ENCODE measurements at regions of chr16 and their contacts with region 1.

Region 1: DNA sequence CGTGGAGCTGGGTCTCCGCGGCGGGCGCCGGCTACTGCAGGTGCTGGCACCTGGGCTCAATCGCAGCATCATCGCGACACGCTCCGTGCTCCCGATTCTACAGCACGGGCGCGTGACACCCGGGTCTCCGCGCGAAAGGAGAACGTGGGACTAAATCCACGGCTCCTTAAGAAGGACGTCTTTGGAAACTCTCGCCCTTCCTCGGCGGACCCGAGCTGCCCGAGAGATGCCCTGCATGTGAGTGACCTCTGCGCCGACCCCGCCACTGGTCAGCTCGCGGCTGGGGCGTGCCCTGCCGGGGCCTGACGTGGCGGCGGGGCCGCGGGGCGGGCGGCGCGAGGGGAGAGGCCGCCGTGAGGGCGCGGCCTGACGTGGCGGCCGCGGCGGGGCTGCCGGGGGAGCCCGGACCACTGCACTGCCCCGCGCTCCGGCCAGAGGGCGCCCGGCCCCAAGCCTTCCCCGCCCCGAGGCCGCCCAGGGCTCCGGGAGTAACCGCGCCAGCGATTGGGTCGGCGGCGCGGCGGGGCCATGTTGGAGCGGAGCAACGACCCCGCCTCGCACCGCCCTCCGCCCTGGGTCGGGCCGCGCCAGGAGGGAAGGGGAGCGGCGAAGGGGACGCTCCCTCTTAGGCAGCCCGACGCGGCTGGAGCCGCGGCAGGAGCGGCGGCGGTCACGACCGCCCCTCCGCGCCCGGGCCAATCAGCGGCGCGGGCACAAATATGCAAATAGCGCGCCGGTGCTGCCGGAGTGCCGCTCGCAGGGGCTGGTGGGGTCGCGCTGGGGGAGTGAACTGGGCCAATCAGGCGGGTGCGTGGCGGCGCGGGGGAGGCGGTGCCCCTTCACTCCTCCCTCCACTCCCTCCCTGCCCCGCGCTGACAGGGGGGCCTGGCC is 75.6 kb downstream of the CHD9 start:
- DNase-seq: peak in 1 of 2 donors; percentile 94
- H3K4me3 ChIP-seq: peak overlapping the region; percentile 88 to 89
- H3K27ac ChIP-seq: peak overlapping the region; percentile 95
- H3K4me1 ChIP-seq: peaks cover 41% of the 10 kb centered on the region
- H3K27me3 ChIP-seq: no peaks in the 10 kb centered on the region
- CTCF ChIP-seq: peak; percentile 23 to 53 (median 42)
- POLR2A ChIP-seq: peak in 1 of 2 donors; percentile 5

Region 2: DNA sequence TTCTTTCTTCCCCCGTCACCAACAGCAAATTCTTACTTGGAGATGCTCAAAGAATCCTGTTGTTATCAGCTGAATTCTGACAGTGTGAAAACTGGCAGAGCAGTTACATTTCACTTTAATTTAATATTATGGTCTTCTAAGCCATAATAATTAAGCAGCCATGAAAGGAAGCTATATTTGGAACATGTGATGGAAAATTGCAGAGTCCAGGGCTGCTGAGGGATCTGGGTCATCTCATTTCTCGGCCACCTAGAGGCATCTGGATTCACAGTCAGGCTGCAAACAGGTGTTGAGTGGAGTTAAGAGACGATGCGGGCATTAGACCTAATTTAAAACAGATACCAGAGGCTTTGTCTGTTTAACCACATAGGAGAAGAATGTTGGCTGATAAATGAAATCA is 116.1 kb before region 1 on chr16:
- intact Hi-C with region 1: no loop called
- DNase-seq: no peak
- H3K4me3 ChIP-seq: no peak overlapping the region
- H3K27ac ChIP-seq: no peak overlapping the region
- H3K4me1 ChIP-seq: no peaks in the 10 kb centered on the region
- H3K27me3 ChIP-seq: no peaks in the 10 kb centered on the region
- CTCF ChIP-seq: no peak
- POLR2A ChIP-seq: no peak

Region 3: DNA sequence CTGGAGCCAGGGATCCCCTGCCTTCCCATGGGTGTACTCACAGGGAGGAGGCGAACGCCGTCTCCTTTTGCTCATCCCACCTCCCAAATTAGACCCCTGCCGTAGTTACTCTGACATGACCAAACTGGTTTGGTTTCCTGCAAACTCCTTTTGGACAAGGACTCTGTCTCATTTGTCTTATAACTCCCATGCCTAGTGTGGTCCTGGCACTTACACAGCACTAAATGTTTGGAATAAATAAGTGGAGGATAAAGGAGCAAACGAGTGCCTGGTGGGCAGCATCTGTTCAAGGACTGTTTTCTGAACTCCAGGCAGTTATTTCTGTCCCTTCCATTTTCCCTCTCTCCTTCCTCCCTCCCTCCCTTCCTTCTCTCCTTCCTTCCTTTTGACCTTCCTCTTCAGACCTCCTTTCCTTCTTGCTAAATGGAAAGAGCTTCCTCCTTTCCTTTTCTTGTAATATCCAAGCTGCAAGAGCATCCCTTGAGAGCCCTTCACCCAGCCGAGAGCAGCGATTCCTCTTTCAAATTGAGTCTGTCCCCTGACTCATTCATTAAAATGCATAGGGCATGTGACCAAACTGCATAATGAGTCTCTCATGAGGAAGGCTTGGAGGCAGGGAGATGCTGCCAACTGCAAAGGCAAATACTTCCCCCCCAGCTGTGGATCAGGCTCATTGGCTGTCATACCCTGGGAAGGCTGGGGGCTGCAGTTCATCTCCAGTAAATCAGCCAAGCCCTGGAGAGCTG is 38.8 kb before region 1 on chr16:
- intact Hi-C with region 1: loop called (anchors 2 kb)
- DNase-seq: no peak
- H3K4me3 ChIP-seq: no peak overlapping the region
- H3K27ac ChIP-seq: peak overlapping the region; percentile 76
- H3K4me1 ChIP-seq: peaks cover 84% of the 10 kb centered on the region
- H3K27me3 ChIP-seq: no peaks in the 10 kb centered on the region
- CTCF ChIP-seq: no peak
- POLR2A ChIP-seq: no peak

Region 4: DNA sequence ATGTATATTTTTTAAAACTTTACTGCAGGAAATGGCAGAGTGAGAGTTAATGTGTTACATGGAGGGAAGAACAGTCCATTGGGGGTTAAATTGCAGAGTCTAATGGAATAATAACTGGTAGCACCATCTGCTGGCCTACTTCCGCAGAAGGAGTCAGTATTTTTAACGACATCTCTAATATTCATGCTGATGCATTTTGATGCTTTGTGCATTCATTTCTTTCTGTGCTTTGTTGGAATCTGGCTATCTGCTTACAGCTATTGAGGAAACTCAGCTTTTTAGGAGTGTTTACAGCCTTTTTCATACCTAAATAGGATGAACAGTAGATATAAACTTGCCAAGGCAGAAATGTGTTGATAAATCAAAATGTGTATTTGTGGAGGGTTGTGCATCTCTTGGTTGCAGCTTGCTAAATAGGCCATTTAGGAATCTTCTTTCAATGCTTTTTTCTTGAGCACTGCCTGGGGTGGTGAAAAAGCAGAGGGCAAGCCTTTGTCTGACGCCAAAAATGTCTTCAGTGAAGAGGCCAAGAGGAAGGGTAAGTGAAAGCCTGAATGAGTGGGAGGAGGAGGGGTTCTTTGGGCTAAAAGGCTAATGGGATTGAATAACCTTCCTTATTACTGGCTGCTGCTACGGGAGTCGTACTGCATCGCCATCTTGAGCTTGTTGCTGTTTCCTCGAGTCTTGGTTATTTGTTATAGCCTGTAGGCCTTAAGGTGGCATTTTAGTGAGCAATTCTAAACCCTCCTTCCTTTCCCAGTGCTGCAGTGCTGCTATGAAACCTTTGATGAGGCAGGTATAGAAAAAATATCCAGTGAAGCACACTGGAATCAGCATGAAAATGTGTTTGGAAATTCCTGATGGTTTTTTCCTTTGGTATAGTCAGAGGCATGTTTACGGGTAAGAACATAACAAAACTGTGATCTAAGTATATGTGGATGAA is 77.7 kb after region 1 on chr16:
- intact Hi-C with region 1: loop called (anchors 10 kb)
- DNase-seq: no peak
- H3K4me3 ChIP-seq: peak overlapping the region; percentile 35 to 47
- H3K27ac ChIP-seq: peak overlapping the region; percentile 74
- H3K4me1 ChIP-seq: peaks cover 49% of the 10 kb centered on the region
- H3K27me3 ChIP-seq: no peaks in the 10 kb centered on the region
- CTCF ChIP-seq: peak in 2 of 3 experiments; percentile 24 to 46
- POLR2A ChIP-seq: no peak

Measured in vagina (tissue), 2 donors.